GM10248 (cell line): ENCODE measurements at regions of chr5 and their contacts with region 1.

Region 1: DNA sequence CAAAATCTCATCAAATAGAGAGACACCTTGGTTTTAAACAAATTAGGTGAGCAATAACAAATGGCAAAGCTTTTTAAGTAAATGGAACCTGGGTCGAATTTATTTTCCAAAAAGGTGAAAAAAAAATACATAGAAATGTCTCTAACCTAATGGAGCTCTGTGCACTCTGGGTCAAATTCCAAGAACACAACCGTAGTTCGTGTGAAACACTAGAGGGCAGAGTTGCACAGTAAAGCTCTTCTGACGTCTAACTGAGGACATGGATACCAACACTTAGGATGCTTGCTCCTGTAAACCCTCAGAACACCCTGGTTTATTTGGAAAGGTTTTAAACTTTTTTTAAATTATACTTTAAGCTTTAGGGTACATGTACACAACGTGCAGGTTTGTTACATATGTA is 18.9 kb downstream of the MARCHF11 start:
- DNase-seq: peak; percentile 26
- CTCF ChIP-seq: peak; percentile 74

Region 2: DNA sequence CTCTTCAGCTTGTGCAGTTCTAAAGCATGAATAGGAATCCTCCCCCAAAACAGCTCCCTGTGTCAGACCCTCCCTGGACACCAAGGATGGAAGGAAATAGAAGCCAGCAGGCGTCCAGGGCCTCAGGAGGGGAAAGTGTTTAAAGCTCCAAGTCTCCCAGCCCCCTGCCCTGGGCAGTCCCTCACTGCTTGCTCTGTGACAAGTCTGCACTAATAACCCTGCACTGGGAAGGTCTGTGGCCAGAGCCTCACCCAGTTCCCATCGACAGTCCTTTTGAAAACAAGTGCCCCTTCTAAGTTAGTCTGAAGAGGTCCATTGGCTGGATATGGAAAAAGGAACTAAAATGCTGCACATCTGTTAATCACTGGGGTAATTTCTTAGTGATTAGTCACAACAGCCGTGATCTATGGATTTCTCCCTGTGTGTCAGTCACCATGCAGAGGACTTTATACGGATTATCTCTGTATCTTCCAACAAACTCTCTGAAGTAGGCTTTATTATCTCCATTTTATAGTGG is 465.4 kb before region 1 on chr5:
- CTCF ChIA-PET with region 1: no interaction called
- POLR2A ChIA-PET with region 1: no interaction called
- DNase-seq: no peak
- CTCF ChIP-seq: no peak

Region 3: GRCh38 chr5:16149621-16150020 is 11.1 kb before region 1 on chr5:
- CTCF ChIA-PET with region 1: interaction called, 24 read pairs
- POLR2A ChIA-PET with region 1: no interaction called
- DNase-seq: no peak
- CTCF ChIP-seq: no peak

Region 4: GRCh38 chr5:16456103-16456832 is 295.6 kb after region 1 on chr5:
- CTCF ChIA-PET with region 1: interaction called, 91 read pairs
- POLR2A ChIA-PET with region 1: no interaction called
- DNase-seq: peak; percentile 40
- CTCF ChIP-seq: peak; percentile 43